B cell (primary cell): ENCODE measurements at regions of chr17 and their contacts with region 1.

Region 1: DNA sequence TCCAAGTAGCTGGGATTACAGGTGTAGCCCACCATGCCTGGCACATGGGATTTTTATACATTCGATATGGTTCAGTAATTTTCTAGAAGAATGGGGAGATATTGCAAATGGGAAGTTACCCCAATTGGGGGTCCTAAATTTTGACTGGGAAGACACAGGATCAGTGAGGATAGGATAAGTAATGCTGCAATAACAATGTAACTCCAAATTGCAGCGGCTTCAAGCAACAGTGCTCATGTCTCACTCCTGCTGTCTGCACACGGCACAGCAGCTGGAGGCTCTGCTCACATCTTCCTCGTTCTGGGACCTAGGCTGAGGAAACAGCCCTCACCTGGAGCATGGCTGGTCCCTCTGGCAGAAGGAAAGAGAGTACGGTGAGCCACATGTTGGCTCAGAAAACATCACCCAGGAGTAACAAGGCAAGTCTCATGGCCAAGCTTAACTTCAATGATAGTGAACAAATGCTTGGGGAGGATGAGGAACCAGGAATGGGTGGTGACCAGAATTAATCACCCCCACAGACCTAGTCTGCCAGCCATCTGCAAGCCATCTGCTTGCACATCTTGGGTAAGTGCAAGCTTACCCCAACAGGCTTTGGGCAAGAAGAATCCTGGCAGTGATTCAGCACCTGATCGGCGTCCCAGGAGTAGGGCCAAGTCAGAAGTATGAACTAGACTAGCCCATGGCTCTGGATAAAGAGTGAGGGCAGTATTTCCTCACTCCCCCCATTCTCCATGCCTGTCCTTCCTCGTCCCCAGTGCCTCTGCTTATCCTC is 229.2 kb downstream of the COPRS start:
- DNase-seq: no peak
- ATAC-seq: no peak
- H3K4me3 ChIP-seq: no peak overlapping the region
- H3K4me3 Mint-ChIP-seq: no peak overlapping the region
- H3K27ac ChIP-seq: no peak overlapping the region
- H3K27ac Mint-ChIP-seq: no peak overlapping the region
- H3K4me1 ChIP-seq: no peaks in the 10 kb centered on the region
- H3K4me1 Mint-ChIP-seq: no peaks in the 10 kb centered on the region
- H3K27me3 ChIP-seq: peaks cover 0 to 11% (median 2%) of the 10 kb centered on the region in 4 experiments
- H3K27me3 Mint-ChIP-seq: peaks cover 47% of the 10 kb centered on the region
- CTCF ChIP-seq: no peak

Region 2: GRCh38 chr17:31467502-31468256 is 162.2 kb before region 1 on chr17:
- CTCF ChIA-PET with region 1: no interaction called
- POLR2A ChIA-PET with region 1: no interaction called
- intact Hi-C with region 1: no loop called
- DNase-seq: no peak
- ATAC-seq: no peak
- H3K4me3 ChIP-seq: no peak overlapping the region
- H3K4me3 Mint-ChIP-seq: no peak overlapping the region
- H3K27ac ChIP-seq: no peak overlapping the region
- H3K27ac Mint-ChIP-seq: no peak overlapping the region
- H3K4me1 ChIP-seq: peaks cover 0 to 7% of the 10 kb centered on the region in 2 donors
- H3K4me1 Mint-ChIP-seq: no peaks in the 10 kb centered on the region
- H3K27me3 ChIP-seq: peaks cover 0 to 4% (median 0%) of the 10 kb centered on the region in 4 experiments
- H3K27me3 Mint-ChIP-seq: no peaks in the 10 kb centered on the region
- CTCF ChIP-seq: no peak

Region 3: DNA sequence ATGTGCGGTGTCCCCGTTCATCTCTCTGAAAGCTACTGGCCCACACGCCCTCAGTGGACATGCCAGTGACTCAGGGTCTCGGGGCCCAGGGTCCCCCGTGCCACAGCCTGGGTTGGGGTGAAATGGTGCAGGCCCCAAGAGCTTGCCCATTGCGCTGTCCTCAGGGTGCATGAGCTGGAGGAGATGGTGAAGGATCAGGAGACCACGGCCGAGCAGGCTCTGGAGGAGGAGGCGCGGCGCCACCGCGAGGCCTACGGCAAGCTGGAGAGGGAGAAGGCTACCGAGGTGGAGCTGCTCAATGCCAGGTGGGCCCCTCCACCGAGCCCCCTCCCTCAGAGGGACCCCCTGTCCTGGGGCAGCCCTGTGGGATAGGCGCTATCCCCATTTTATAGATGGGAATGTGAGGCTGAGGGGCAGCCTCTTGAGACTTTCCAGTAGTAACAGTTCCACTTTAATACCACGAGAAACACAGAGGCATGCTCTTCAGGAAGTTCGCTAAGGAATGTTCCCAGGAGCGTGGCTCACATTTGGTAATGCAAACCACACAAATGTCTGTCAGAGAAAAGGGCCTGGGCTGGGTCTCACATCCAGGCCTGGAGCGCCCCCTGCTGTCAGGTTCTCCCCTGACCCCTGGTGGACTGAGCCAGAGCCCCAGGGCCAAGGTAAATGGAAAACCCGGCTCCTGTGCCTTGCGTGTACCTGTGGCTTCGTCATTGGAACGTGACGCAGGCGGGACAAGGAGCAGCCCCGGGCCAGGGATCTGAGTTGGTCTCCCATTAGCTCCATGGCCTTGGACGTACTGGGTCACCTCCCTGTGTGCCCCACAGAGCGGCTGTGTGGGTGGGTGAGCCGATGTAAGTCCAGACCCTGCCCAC is 104.7 kb before region 1 on chr17:
- CTCF ChIA-PET with region 1: no interaction called
- POLR2A ChIA-PET with region 1: no interaction called
- intact Hi-C with region 1: no loop called
- DNase-seq: peak; percentile 86
- ATAC-seq: peak; percentile 79
- H3K4me3 ChIP-seq: no peak overlapping the region
- H3K4me3 Mint-ChIP-seq: no peak overlapping the region
- H3K27ac ChIP-seq: no peak overlapping the region
- H3K27ac Mint-ChIP-seq: peak overlapping the region; percentile 65
- H3K4me1 ChIP-seq: peaks cover 0 to 13% of the 10 kb centered on the region in 2 donors
- H3K4me1 Mint-ChIP-seq: peaks cover 9% of the 10 kb centered on the region
- H3K27me3 ChIP-seq: no peaks in the 10 kb centered on the region
- H3K27me3 Mint-ChIP-seq: no peaks in the 10 kb centered on the region
- CTCF ChIP-seq: peak; percentile 89

Region 4: GRCh38 chr17:31549525-31550388 is 80.1 kb before region 1 on chr17:
- CTCF ChIA-PET with region 1: no interaction called
- POLR2A ChIA-PET with region 1: no interaction called
- intact Hi-C with region 1: no loop called
- DNase-seq: peak; percentile 94
- ATAC-seq: peak; percentile 83
- H3K4me3 ChIP-seq: peak overlapping the region; percentile 79 to 91 (median 82)
- H3K4me3 Mint-ChIP-seq: peak overlapping the region; percentile 93
- H3K27ac ChIP-seq: peak overlapping the region; percentile 44 to 70
- H3K27ac Mint-ChIP-seq: peak overlapping the region; percentile 94
- H3K4me1 ChIP-seq: peaks cover 11 to 15% of the 10 kb centered on the region in 2 donors
- H3K4me1 Mint-ChIP-seq: peaks cover 28% of the 10 kb centered on the region
- H3K27me3 ChIP-seq: no peaks in the 10 kb centered on the region
- H3K27me3 Mint-ChIP-seq: no peaks in the 10 kb centered on the region
- CTCF ChIP-seq: no peak

Region 5: GRCh38 chr17:31680126-31680525 is 50.2 kb after region 1 on chr17:
- CTCF ChIA-PET with region 1: no interaction called
- POLR2A ChIA-PET with region 1: no interaction called
- intact Hi-C with region 1: loop called (anchors 10 kb)
- DNase-seq: peak; percentile 7
- ATAC-seq: no peak
- H3K4me3 ChIP-seq: no peak overlapping the region
- H3K4me3 Mint-ChIP-seq: no peak overlapping the region
- H3K27ac ChIP-seq: no peak overlapping the region
- H3K27ac Mint-ChIP-seq: no peak overlapping the region
- H3K4me1 ChIP-seq: no peaks in the 10 kb centered on the region
- H3K4me1 Mint-ChIP-seq: no peaks in the 10 kb centered on the region
- H3K27me3 ChIP-seq: peaks cover 0 to 15% (median 3%) of the 10 kb centered on the region in 4 experiments
- H3K27me3 Mint-ChIP-seq: peaks cover 31% of the 10 kb centered on the region
- CTCF ChIP-seq: no peak